GM23248 (cell line): ENCODE measurements at regions of chr15 and their contacts with region 1.

Region 1: DNA sequence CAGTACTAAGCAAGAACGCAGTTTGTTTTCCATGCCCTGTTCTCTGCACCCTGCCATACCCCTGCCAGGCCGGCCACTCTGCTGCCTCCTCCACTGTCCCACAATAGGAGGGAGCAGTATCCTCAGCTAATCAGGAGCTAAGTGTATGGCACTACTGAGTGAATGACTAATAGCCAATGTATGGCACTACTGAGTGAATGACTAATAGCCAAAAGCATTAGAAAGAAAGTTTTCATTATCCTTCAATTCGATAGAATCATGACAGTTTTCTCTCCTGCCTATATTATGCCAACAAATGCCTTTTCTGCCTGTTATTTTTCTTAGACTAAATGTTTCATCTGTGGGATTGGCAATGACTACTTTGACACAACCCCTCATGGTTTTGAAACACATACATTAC is 107.5 kb upstream of the CHRM5 start:
- DNase-seq: peak; percentile 73
- H3K4me3 ChIP-seq: no peak overlapping the region
- H3K27ac ChIP-seq: no peak overlapping the region
- H3K4me1 ChIP-seq: peaks cover 16% of the 10 kb centered on the region
- H3K27me3 ChIP-seq: no peaks in the 10 kb centered on the region

Region 2: GRCh38 chr15:32053719-32054118 is 1807.0 kb before region 1 on chr15:
- in situ Hi-C with region 1: no loop called
- DNase-seq: no peak
- H3K4me3 ChIP-seq: no peak overlapping the region
- H3K27ac ChIP-seq: no peak overlapping the region
- H3K4me1 ChIP-seq: no peaks in the 10 kb centered on the region
- H3K27me3 ChIP-seq: no peaks in the 10 kb centered on the region

Region 3: DNA sequence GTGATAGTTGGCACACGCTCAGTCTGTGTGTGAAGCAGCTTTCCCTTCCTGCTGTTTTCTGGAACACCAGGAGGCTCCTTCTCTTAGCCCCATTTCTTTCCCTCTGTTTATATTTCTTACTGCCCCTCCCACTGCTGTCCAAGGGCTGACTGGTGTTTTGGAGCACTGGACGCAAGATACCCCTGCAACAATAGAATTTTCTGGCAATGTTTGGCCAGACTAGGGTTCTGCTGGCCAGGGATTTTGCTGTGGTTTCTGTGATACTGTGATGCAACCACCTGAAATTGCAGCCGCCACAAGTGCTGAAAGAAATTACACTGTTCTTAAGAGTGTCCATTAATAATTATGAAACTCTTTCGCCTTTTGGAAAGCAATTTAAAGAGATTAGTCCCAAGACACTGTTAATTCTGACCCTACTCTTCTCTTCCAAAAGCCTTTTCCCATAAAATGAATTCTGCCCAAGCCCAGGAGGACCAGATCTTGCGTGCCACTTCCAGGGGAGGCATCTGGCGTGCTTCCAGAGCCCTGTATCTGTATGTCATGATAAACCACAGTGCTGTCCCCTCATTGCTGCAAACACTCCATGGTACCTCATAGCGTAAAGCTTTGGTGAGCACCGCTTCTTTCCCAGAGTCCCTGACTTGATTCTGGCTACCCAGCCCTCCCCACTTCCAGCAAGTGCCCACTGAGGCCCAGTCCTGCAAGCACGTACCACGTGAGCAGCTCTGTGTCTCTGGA is 51.9 kb before region 1 on chr15:
- in situ Hi-C with region 1: loop called (anchors 10 kb)
- DNase-seq: no peak
- H3K4me3 ChIP-seq: no peak overlapping the region
- H3K27ac ChIP-seq: no peak overlapping the region
- H3K4me1 ChIP-seq: no peaks in the 10 kb centered on the region
- H3K27me3 ChIP-seq: peaks cover 40% of the 10 kb centered on the region